ENCODE measurements at regions of chr17 and their contacts with region 1.

Region 1: GRCh38 chr17:29622337-29623282 is at the start of gene CORO6:
- DNase-seq: peak in 2 of 3 donors; percentile 44 to 56
- ATAC-seq: peak; percentile 45 to 60 (median 46)
- H3K4me3 ChIP-seq: peak within 1 kb of the TSS; percentile 32 to 58 (median 48)
- H3K27ac ChIP-seq: no peak within 1 kb of the TSS
- H3K4me1 ChIP-seq: peaks cover 0 to 18% (median 3%) of the 10 kb centered on the region in 4 donors
- H3K27me3 ChIP-seq: no peaks in the 10 kb centered on the region
- CTCF ChIP-seq: no peak
- POLR2A ChIP-seq: no peak
- total RNA-seq, gene CORO6: 0.37 to 5.1 (median 0.81) TPM

Region 2: GRCh38 chr17:29659155-29659554 is 36.5 kb after region 1 on chr17:
- intact Hi-C with region 1: no loop called
- DNase-seq: no peak
- ATAC-seq: no peak
- H3K4me3 ChIP-seq: no peak overlapping the region
- H3K27ac ChIP-seq: no peak overlapping the region
- H3K4me1 ChIP-seq: peaks cover 0 to 8% (median 0%) of the 10 kb centered on the region in 4 donors
- H3K27me3 ChIP-seq: no peaks in the 10 kb centered on the region
- CTCF ChIP-seq: no peak
- POLR2A ChIP-seq: no peak

Region 3: DNA sequence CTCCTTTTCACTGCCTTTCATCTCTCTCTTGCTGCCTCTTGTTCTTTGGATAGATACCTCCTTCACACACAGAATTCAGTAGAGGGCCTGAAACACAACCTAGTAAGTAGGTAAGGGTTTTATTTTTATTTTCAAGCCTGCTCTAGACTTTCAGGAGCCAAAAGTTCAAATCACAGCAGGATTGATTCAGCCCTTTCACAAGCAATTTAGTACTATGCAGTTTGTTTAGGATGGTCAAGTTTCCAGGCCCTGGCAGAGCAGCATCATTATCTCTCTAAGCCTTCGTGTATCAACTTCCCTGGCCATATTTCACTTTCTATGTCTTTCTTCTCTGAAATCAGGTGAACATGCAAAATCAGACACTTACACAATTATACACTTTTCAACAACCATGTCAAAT is 148.9 kb after region 1 on chr17:
- intact Hi-C with region 1: loop called (anchors 10 kb)
- DNase-seq: no peak
- ATAC-seq: no peak
- H3K4me3 ChIP-seq: no peak overlapping the region
- H3K27ac ChIP-seq: no peak overlapping the region
- H3K4me1 ChIP-seq: peaks cover 0 to 8% (median 0%) of the 10 kb centered on the region in 4 donors
- H3K27me3 ChIP-seq: no peaks in the 10 kb centered on the region
- CTCF ChIP-seq: no peak
- POLR2A ChIP-seq: no peak